ENCODE measurements at regions of chr20 and their contacts with region 1.

Region 1: DNA sequence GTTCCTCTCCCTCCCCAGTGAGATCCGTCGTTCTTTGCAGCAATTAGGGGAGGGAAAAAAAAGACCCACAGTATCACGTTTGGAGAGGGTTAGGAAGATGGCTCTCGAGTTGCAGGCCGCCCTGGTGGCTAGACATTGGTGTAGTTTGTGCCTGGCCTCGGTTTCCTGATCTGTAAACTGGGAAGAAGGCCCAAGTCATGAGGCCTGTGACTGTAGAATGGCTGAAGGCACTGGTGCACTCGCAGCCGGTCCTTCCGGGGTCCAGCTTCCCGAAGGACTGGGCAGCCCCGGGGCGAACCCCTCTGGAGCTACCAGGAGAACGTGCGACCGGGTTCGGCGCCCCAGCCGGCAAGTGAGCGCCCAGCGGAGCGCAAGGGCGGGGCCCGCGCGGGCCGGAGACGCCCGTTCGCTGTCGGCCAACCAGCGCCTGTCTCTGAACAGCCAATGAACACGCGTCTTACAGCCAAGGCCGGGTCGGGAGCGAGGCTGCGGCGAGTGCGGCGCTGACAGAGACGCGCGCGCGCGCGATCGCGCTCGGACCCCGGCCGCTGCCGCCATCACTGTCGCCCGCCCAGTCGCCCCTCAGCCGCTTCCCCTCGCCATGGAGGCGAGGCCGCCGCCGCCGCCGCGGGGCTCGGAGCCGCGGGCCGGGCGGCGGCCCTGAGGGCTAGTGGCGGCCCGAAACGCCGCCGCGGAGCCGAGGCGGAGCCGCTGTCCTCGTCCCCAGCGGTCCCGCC is at the start of gene PTPRA:
- DNase-seq: peak; percentile 83 to 95 (median 89)
- ATAC-seq: peak; percentile 87
- H3K4me3 ChIP-seq: peak within 1 kb of the TSS; percentile 91
- H3K4me3 Mint-ChIP-seq: peak within 1 kb of the TSS; percentile 96
- H3K27ac ChIP-seq: peak within 1 kb of the TSS in 1 of 2 donors; percentile 34
- H3K27ac Mint-ChIP-seq: peak within 1 kb of the TSS; percentile 94
- H3K4me1 ChIP-seq: peaks cover 38% of the 10 kb centered on the region
- H3K4me1 Mint-ChIP-seq: peaks cover 42% of the 10 kb centered on the region
- H3K27me3 ChIP-seq: peaks cover 0 to 3% of the 10 kb centered on the region in 2 experiments
- H3K27me3 Mint-ChIP-seq: no peaks in the 10 kb centered on the region
- CTCF ChIP-seq: no peak
- total RNA-seq, gene PTPRA: 65.4 to 69.5 TPM

Region 2: DNA sequence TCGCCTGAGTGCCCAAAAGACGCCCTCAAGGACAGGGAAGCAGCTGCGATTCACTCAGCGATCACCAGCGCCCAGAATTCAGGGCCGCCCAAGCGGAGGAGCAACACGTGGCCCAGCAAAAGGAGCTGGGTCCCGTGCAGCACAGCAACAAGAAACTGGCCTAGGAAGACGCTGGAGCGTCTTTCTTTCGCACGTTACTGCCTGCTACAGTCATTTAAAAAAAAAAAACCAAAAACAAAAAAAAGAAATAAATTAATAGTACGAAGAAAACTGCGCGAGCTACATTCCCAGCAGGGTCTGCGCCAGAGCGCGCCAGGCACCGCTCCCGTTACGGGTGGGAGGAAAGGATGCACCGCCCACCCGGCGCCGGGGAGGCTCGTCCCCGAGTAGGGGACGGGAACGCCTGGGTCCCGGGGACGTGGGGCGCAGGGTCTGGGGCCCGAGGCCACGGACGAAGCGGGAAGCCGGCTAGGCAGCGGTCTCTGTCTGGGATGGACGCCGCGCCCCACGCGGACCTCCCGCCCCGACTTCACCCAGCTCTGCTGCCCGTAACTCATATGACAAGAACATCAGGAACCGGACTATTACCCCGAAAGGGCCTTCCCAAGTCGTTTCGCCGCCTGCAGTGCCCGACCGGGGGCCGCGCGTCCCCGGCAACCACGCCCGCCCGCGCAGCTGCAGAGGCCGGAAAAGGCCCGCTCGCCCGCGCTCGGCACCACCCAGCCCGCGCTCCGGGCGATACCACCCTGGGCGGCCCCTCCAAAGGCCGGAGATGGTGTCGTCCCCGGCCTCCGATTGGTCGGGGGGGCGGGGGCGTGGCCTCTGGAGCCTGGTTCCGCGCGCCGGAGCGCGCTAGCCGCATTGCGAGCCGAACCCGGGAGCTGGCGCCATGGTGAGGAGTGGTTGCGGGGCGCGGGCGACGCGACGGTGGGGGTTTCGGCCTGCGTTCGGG is 221.1 kb before region 1 on chr20 and contains the start of gene NOP56:
- CTCF ChIA-PET with region 1: no interaction called
- POLR2A ChIA-PET with region 1: interaction called, 13 read pairs
- intact Hi-C with region 1: no loop called
- DNase-seq: peak; percentile 85 to 98 (median 95)
- ATAC-seq: peak; percentile 86
- H3K4me3 ChIP-seq: peak within 1 kb of the TSS; percentile 81
- H3K4me3 Mint-ChIP-seq: peak within 1 kb of the TSS; percentile 95
- H3K27ac ChIP-seq: peak within 1 kb of the TSS; percentile 66 to 83
- H3K27ac Mint-ChIP-seq: peak within 1 kb of the TSS; percentile 94
- H3K4me1 ChIP-seq: peaks cover 48% of the 10 kb centered on the region
- H3K4me1 Mint-ChIP-seq: peaks cover 59% of the 10 kb centered on the region
- H3K27me3 ChIP-seq: no peaks in the 10 kb centered on the region
- H3K27me3 Mint-ChIP-seq: no peaks in the 10 kb centered on the region
- CTCF ChIP-seq: no peak
- total RNA-seq, gene NOP56: 261 to 262 TPM

Region 3: DNA sequence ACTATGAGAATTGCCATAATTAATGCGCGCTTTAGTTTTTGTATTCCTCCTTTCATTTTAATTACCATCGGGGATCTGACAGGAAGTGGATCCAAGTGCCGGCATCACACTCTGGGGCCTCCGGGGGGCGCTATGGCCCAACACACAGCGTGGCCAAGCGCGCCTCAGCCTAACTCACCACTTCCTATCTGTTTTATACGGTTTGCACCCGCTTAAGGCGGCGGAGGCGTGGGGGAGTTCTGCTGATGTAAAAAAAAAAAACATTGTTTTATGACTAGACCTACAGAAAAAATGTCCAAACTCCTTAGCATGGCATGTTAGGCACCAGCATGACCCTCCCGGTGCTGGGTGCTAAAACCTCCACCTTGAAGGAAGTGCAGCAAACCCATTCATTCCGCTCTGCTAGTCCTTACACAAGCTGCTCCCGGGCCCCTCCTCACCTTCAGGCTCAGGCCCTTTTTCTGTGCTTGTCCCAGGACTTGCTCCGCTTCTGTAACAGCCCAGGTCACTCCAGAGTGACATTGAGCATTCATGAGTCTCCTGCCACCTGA is 185.1 kb before region 1 on chr20:
- CTCF ChIA-PET with region 1: no interaction called
- POLR2A ChIA-PET with region 1: interaction called, 5 read pairs
- intact Hi-C with region 1: loop called in 1 of 2 experiments (anchors 1 kb)
- DNase-seq: peak; percentile 67 to 90 (median 77)
- ATAC-seq: peak; percentile 94
- H3K4me3 ChIP-seq: no peak overlapping the region
- H3K4me3 Mint-ChIP-seq: peak overlapping the region; percentile 66
- H3K27ac ChIP-seq: no peak overlapping the region
- H3K27ac Mint-ChIP-seq: no peak overlapping the region
- H3K4me1 ChIP-seq: peaks cover 22% of the 10 kb centered on the region
- H3K4me1 Mint-ChIP-seq: peaks cover 25% of the 10 kb centered on the region
- H3K27me3 ChIP-seq: peaks cover 0 to 3% of the 10 kb centered on the region in 2 experiments
- H3K27me3 Mint-ChIP-seq: peaks cover 35% of the 10 kb centered on the region
- CTCF ChIP-seq: peak; percentile 78

Region 4: DNA sequence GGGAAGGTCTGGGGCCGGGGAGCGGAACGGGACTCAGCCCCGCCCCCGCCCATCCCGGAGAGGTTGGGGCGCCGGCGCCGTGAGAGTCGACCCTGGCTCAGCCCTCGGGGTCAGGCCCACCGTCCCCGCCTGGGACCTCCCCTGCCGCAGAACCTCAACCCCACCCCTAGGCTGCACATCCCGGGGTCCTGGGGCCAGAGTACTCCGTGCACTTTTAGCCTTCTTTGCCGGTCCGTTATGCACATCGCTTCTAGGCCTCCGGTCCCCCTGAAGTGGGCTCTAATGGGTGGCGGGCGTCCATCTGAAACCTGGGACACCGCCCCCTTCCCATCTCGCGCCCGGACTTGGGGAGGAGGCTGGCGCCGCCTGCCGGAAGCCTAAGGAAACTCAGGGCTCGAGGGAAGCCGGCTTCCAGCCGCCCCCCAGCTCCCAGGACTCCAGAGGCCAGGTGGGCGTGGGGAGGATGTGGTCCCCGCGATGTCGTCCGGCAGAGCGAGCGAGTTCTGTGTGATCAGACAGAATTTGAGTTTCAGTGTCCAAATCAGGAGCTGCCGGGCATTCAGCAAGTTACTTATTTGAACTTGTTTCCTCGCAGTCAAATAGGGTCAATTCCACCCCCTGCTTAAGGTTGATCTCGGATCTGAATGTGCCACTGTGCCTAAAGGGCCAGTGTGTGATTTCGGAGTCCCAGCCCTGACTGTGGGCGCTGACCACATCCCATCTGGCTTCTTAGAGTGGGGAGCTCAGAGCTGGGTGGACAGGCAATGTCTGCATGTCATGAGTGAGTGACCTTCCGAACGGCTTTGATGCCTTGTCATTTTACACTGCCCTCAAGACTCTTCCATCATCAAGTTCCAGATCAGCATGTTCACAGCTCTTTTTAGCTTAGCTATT is 120.4 kb before region 1 on chr20:
- CTCF ChIA-PET with region 1: interaction called, 3 read pairs
- POLR2A ChIA-PET with region 1: no interaction called
- intact Hi-C with region 1: loop called in 1 of 2 experiments (anchors 5 kb)
- DNase-seq: peak in 13 of 14 experiments; percentile 19 to 76 (median 47)
- ATAC-seq: peak; percentile 37
- H3K4me3 ChIP-seq: peak overlapping the region; percentile 60
- H3K4me3 Mint-ChIP-seq: peak overlapping the region; percentile 90
- H3K27ac ChIP-seq: no peak overlapping the region
- H3K27ac Mint-ChIP-seq: no peak overlapping the region
- H3K4me1 ChIP-seq: peaks cover 40% of the 10 kb centered on the region
- H3K4me1 Mint-ChIP-seq: peaks cover 28% of the 10 kb centered on the region
- H3K27me3 ChIP-seq: peaks cover 12 to 13% of the 10 kb centered on the region in 2 experiments
- H3K27me3 Mint-ChIP-seq: peaks cover 17% of the 10 kb centered on the region
- CTCF ChIP-seq: peak; percentile 81

Region 5: DNA sequence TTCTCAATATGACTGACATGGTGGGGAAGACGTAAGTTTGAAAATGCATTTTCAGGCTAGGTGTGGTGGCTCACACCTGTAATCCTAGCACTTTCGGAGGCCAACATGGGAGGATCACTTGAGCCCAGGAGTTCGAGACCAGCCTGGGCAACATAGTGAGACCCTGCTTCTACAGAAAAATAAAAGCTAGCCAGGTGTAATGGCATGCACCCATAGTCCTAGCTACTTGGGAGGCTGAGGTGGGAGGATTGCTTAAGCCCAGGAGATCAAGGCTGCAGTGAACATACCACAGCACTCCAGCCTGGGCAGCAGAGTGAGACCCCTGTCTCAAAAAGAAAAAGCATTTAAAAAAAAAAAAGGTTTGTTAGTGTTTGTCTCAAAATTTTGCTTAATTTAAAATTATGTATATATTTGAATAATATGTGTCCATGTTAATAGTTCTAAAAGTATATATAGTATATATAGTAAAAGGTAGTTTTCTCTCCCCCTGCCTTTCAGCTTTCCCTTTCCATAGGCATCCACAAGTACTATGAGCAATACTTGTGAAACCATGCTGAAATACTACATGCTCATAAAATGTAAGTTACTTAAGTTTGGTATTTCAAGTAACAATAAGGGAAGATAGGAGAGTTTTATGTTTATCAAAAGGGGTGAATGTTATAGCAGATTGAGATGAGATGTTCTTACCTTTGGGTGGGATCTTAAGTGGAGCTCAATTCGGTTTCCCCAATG is 15.2 kb after region 1 on chr20:
- CTCF ChIA-PET with region 1: interaction called, 4 read pairs
- POLR2A ChIA-PET with region 1: interaction called, 3 read pairs
- intact Hi-C with region 1: loop called in 1 of 2 experiments (anchors 2 kb)
- DNase-seq: no peak
- ATAC-seq: no peak
- H3K4me3 ChIP-seq: no peak overlapping the region
- H3K4me3 Mint-ChIP-seq: no peak overlapping the region
- H3K27ac ChIP-seq: no peak overlapping the region
- H3K27ac Mint-ChIP-seq: no peak overlapping the region
- H3K4me1 ChIP-seq: peaks cover 8% of the 10 kb centered on the region
- H3K4me1 Mint-ChIP-seq: peaks cover 77% of the 10 kb centered on the region
- H3K27me3 ChIP-seq: no peaks in the 10 kb centered on the region
- H3K27me3 Mint-ChIP-seq: no peaks in the 10 kb centered on the region
- CTCF ChIP-seq: no peak

Region 6: DNA sequence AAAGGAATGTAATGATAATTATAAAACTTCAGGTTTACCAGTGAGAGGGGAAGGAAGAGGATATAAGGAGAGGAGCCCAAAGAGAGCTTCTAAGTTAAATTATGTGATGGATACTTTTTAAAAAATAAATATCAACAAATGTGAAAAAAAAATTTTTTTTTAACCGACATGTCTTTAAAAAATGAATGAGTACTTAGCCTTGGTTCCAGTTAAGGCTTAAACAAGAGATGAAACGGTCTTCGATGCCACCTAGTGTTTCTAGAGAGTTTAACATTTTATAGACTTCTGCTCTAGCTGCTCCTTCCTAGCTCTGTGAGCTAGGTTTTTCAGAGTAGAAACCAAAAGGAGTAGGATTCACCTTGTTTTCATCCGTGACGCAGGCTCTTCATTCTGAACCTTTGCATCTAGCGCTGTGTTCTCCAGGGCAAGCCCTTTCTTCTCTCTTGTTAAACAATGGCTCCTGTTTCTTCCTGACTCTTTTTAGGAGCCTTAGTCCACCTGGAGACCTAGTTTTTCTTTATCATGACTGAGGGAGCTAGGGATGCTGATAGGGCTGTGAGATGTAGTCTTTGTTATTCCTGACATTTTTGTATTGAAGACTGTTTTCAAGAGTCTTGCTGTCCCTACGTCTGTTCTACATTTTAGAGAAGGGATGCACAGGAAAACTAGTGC is 127.8 kb after region 1 on chr20:
- CTCF ChIA-PET with region 1: interaction called, 3 read pairs
- POLR2A ChIA-PET with region 1: no interaction called
- intact Hi-C with region 1: loop called in 1 of 2 experiments (anchors 5 kb)
- DNase-seq: peak in 4 of 14 experiments; percentile 7 to 65 (median 56)
- ATAC-seq: peak; percentile 89
- H3K4me3 ChIP-seq: no peak overlapping the region
- H3K4me3 Mint-ChIP-seq: no peak overlapping the region
- H3K27ac ChIP-seq: no peak overlapping the region
- H3K27ac Mint-ChIP-seq: no peak overlapping the region
- H3K4me1 ChIP-seq: no peaks in the 10 kb centered on the region
- H3K4me1 Mint-ChIP-seq: no peaks in the 10 kb centered on the region
- H3K27me3 ChIP-seq: no peaks in the 10 kb centered on the region
- H3K27me3 Mint-ChIP-seq: no peaks in the 10 kb centered on the region
- CTCF ChIP-seq: peak; percentile 60

Region 7: GRCh38 chr20:3686867-3687321 is 813.7 kb after region 1 on chr20:
- CTCF ChIA-PET with region 1: no interaction called
- POLR2A ChIA-PET with region 1: no interaction called
- intact Hi-C with region 1: no loop called
- DNase-seq: no peak
- ATAC-seq: no peak
- H3K4me3 ChIP-seq: no peak overlapping the region
- H3K4me3 Mint-ChIP-seq: no peak overlapping the region
- H3K27ac ChIP-seq: no peak overlapping the region
- H3K27ac Mint-ChIP-seq: no peak overlapping the region
- H3K4me1 ChIP-seq: no peaks in the 10 kb centered on the region
- H3K4me1 Mint-ChIP-seq: no peaks in the 10 kb centered on the region
- H3K27me3 ChIP-seq: peaks cover 12 to 14% of the 10 kb centered on the region in 2 experiments
- H3K27me3 Mint-ChIP-seq: peaks cover 42% of the 10 kb centered on the region
- CTCF ChIP-seq: no peak